Aorta (tissue), 5 donors: ENCODE measurements at regions of chr9 and their contacts with region 1.

Region 1: GRCh38 chr9:70639853-70640814 is 225.7 kb upstream of the KLF9 start:
- DNase-seq: no peak
- ATAC-seq: peak; percentile 84
- H3K4me3 ChIP-seq: peak overlapping the region in 1 of 2 donors; percentile 82
- H3K27ac ChIP-seq: no peak overlapping the region
- H3K4me1 ChIP-seq: no peaks in the 10 kb centered on the region
- H3K27me3 ChIP-seq: no peaks in the 10 kb centered on the region

Region 2: GRCh38 chr9:70924895-70925547 is 284.9 kb after region 1 on chr9:
- intact Hi-C with region 1: loop called (anchors 2 to 5 kb)
- DNase-seq: no peak
- ATAC-seq: peak; percentile 94
- H3K4me3 ChIP-seq: peak overlapping the region; percentile 40 to 76
- H3K27ac ChIP-seq: peak overlapping the region; percentile 88 to 90
- H3K4me1 ChIP-seq: peaks cover 0 to 2% of the 10 kb centered on the region in 2 donors
- H3K27me3 ChIP-seq: no peaks in the 10 kb centered on the region

Region 3: GRCh38 chr9:70933321-70933720 is 293.2 kb after region 1 on chr9:
- intact Hi-C with region 1: loop called in 1 of 2 experiments (anchors 5 kb)
- DNase-seq: no peak
- ATAC-seq: no peak
- H3K4me3 ChIP-seq: no peak overlapping the region
- H3K27ac ChIP-seq: no peak overlapping the region
- H3K4me1 ChIP-seq: no peaks in the 10 kb centered on the region
- H3K27me3 ChIP-seq: no peaks in the 10 kb centered on the region

Region 4: GRCh38 chr9:71001780-71002386 is 361.7 kb after region 1 on chr9:
- intact Hi-C with region 1: loop called in 1 of 2 experiments (anchors 5 kb)
- DNase-seq: no peak
- ATAC-seq: no peak
- H3K4me3 ChIP-seq: no peak overlapping the region
- H3K27ac ChIP-seq: no peak overlapping the region
- H3K4me1 ChIP-seq: peaks cover 2 to 10% of the 10 kb centered on the region in 2 donors
- H3K27me3 ChIP-seq: peaks cover 0 to 1% of the 10 kb centered on the region in 2 donors

Region 5: DNA sequence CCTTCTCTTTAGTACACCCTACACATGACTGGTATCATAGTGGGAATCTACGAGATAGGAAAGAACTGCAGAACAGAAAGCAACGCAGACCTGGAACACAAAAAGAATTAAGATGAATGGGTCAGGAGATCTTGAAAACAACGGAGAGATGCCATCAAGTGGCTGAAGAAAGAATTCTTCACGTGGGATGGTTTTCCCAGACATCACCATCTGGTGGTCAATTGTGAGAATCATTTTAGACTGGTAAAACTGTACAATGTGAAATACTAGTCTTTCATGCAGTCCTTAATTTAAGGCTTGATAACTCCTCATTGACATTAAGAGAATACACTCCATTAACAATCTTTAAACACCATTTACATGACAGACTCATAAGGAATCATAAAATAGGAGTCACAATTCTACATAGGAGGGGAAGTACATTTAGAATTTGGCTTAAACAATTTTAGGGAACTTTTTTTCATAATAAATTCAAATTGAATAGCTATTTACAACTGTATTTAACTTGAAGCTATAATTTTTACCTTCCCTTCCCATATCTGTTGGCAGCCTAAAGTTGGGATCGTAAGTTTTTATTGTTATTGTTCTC is 609.7 kb after region 1 on chr9:
- intact Hi-C with region 1: loop called (anchors 2 kb)
- DNase-seq: no peak
- ATAC-seq: peak; percentile 83
- H3K4me3 ChIP-seq: no peak overlapping the region
- H3K27ac ChIP-seq: no peak overlapping the region
- H3K4me1 ChIP-seq: no peaks in the 10 kb centered on the region
- H3K27me3 ChIP-seq: no peaks in the 10 kb centered on the region